ENCODE measurements at regions of chr12 and their contacts with region 1.

Region 1: GRCh38 chr12:949453-950191 is at the start of gene RAD52:
- DNase-seq: peak; percentile 99
- ATAC-seq: peak; percentile 93
- H3K4me3 Mint-ChIP-seq: peak within 1 kb of the TSS; percentile 100
- H3K27ac Mint-ChIP-seq: peak within 1 kb of the TSS; percentile 98
- H3K4me1 Mint-ChIP-seq: peaks cover 37% of the 10 kb centered on the region
- H3K27me3 Mint-ChIP-seq: no peaks in the 10 kb centered on the region
- total RNA-seq, gene RAD52: 16.0 to 17.4 TPM

Region 2: GRCh38 chr12:401235-402028 is 548.2 kb before region 1 on chr12 and contains the start of gene CCDC77:
- CTCF ChIA-PET with region 1: interaction called, 3 read pairs
- POLR2A ChIA-PET with region 1: no interaction called
- intact Hi-C with region 1: loop called (anchors 1 to 2 kb)
- DNase-seq: peak; percentile 96
- ATAC-seq: peak; percentile 100
- H3K4me3 Mint-ChIP-seq: no peak within 1 kb of the TSS
- H3K27ac Mint-ChIP-seq: no peak within 1 kb of the TSS
- H3K4me1 Mint-ChIP-seq: peaks cover 5% of the 10 kb centered on the region
- H3K27me3 Mint-ChIP-seq: no peaks in the 10 kb centered on the region
- total RNA-seq, gene CCDC77: 17.3 to 18.7 TPM

Region 3: GRCh38 chr12:575948-576612 is 373.5 kb before region 1 on chr12:
- CTCF ChIA-PET with region 1: interaction called, 5 read pairs
- POLR2A ChIA-PET with region 1: interaction called, 3 read pairs
- intact Hi-C with region 1: loop called in 1 of 2 experiments (anchors 1 kb)
- DNase-seq: peak; percentile 91
- ATAC-seq: peak; percentile 83
- H3K4me3 Mint-ChIP-seq: peak overlapping the region; percentile 46
- H3K27ac Mint-ChIP-seq: peak overlapping the region; percentile 77
- H3K4me1 Mint-ChIP-seq: peaks cover 42% of the 10 kb centered on the region
- H3K27me3 Mint-ChIP-seq: no peaks in the 10 kb centered on the region

Region 4: DNA sequence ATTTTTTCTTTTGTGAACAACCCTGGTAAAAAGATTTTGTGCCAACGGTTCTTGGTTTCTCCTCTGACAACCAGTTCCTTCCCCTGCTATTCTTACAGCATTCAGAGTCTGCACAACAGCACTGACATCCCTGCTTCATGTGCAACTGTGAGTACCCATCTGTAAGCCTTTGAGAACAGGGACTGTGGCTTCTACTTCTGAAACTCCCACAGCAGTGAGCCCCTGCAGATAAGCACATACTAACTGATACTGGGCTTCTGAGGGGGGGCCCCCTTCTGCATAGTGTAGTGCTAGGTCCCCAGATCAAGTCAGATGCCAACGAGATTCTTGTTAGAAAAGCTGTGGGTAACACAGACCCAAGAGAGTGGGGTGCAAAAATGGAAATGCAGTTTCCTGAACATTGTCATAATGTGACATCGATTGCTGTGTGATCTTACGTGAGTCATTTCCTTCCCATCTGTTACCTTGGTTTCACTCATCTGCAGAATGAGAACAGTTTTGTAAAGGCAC is 275.3 kb before region 1 on chr12:
- CTCF ChIA-PET with region 1: no interaction called
- POLR2A ChIA-PET with region 1: no interaction called
- intact Hi-C with region 1: loop called in 1 of 2 experiments (anchors 2 kb)
- DNase-seq: peak; percentile 90
- ATAC-seq: peak; percentile 95
- H3K4me3 Mint-ChIP-seq: peak overlapping the region; percentile 59
- H3K27ac Mint-ChIP-seq: peak overlapping the region; percentile 92
- H3K4me1 Mint-ChIP-seq: peaks cover 82% of the 10 kb centered on the region
- H3K27me3 Mint-ChIP-seq: peaks cover 2% of the 10 kb centered on the region

Region 5: GRCh38 chr12:795305-795704 is 154.3 kb before region 1 on chr12:
- CTCF ChIA-PET with region 1: no interaction called
- POLR2A ChIA-PET with region 1: no interaction called
- intact Hi-C with region 1: no loop called
- DNase-seq: peak; percentile 86
- ATAC-seq: peak; percentile 90
- H3K4me3 Mint-ChIP-seq: peak overlapping the region; percentile 56
- H3K27ac Mint-ChIP-seq: peak overlapping the region; percentile 85
- H3K4me1 Mint-ChIP-seq: peaks cover 84% of the 10 kb centered on the region
- H3K27me3 Mint-ChIP-seq: no peaks in the 10 kb centered on the region

Region 6: GRCh38 chr12:938810-939209 is 10.8 kb before region 1 on chr12:
- CTCF ChIA-PET with region 1: interaction called, 10 read pairs
- POLR2A ChIA-PET with region 1: no interaction called
- intact Hi-C with region 1: no loop called
- DNase-seq: no peak
- ATAC-seq: no peak
- H3K4me3 Mint-ChIP-seq: no peak overlapping the region
- H3K27ac Mint-ChIP-seq: peak overlapping the region; percentile 23
- H3K4me1 Mint-ChIP-seq: peaks cover 12% of the 10 kb centered on the region
- H3K27me3 Mint-ChIP-seq: no peaks in the 10 kb centered on the region

Region 7: DNA sequence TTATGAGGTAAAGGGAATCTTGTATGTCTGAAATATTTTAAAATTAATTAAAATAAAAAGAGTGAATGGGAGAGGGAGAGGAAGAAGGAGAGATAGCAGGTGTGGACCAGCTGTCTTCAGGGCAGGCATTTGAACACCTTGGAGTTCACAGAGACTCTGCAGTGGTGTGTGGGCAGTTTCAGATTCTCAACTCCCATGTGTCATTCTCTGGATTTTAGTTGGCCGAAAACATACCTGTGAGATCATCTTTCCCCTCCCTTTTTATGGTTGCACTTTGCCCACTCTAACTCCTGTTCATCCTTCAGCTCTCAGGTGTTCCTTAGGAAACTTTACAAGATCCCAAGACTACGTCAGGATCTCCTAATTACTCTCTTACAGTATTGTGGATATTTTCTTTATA is 149.5 kb after region 1 on chr12:
- CTCF ChIA-PET with region 1: interaction called, 8 read pairs
- POLR2A ChIA-PET with region 1: no interaction called
- intact Hi-C with region 1: loop called (anchors 5 kb)
- DNase-seq: peak; percentile 67
- ATAC-seq: peak; percentile 88
- H3K4me3 Mint-ChIP-seq: no peak overlapping the region
- H3K27ac Mint-ChIP-seq: no peak overlapping the region
- H3K4me1 Mint-ChIP-seq: peaks cover 62% of the 10 kb centered on the region
- H3K27me3 Mint-ChIP-seq: peaks cover 2% of the 10 kb centered on the region

Measured in activated CD4-positive, alpha-beta T cell treated with anti-CD3 and anti-CD28 coated beads for 36 hours (primary cell).